ENCODE measurements at regions of chr3 and their contacts with region 1.

Region 1: DNA sequence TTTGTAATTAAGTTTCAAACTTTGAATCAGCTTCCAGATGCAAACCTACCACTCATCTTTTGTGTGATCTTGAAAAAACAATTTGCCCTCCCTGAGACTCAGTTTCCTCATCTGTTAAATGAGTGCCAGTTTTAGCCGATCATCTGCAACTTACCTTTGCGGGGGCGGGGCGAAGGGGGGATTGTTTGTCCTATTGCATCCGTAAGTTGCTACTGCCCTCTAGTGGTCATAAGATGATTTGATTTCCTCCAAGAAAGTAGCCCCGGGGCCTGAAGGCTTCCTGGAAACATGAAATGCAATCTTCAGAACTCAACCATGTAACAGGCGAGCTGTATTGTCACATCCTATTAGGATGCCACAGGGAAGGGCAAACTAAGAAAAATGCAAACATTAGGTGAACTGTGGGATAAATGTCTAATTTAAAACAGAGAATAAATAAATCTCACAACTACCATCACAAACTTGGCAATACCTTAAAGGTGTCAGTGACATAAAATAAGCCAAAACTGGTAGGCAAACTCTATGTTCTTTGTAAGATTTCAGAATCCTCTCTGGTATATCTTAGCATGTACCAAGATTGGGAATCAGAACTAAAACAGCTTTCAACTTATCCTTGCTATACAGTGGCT is 63.5 kb upstream of the CLDN18 start:
- DNase-seq: peak; percentile 79
- H3K4me3 Mint-ChIP-seq: no peak overlapping the region
- H3K27ac Mint-ChIP-seq: no peak overlapping the region
- H3K4me1 Mint-ChIP-seq: peaks cover 4% of the 10 kb centered on the region
- H3K27me3 Mint-ChIP-seq: no peaks in the 10 kb centered on the region

Region 2: DNA sequence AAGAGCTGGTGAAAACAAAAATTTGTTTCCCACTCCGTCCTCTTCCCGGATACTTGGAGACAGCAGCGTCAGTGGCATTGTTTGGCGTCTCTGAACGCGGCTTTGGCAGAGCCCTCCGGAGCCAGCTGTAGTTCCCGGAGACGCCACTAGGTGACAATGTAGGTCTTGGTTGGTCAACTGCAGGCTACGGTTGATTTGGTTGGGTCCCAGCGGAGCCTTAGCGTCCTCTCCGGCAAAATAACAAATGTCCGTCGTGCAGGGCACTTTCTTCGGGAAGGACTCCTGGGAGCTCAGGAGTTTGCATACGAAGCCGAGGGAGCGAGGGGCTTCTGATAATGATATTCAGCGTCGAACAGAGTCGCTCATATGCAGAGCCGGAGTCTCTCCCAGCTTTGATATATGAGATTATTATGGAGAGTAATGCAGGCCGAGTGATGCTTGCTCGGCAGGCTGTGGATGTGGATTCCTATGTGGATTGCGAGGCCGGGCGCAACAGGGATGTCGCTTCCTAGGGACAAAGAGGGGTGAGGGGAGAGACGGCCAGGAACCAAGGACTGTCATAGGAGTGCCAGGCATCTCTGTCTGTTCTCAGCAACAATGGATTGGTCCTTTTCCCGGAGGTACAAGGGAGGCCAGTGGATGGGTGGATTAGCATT is 913.9 kb before region 1 on chr3:
- intact Hi-C with region 1: loop called (anchors 5 kb)
- DNase-seq: peak; percentile 93
- H3K4me3 Mint-ChIP-seq: peak overlapping the region; percentile 62
- H3K27ac Mint-ChIP-seq: no peak overlapping the region
- H3K4me1 Mint-ChIP-seq: peaks cover 6% of the 10 kb centered on the region
- H3K27me3 Mint-ChIP-seq: peaks cover 33% of the 10 kb centered on the region

Region 3: GRCh38 chr3:137105277-137105977 is 841.0 kb before region 1 on chr3:
- intact Hi-C with region 1: loop called (anchors 1 kb)
- DNase-seq: peak; percentile 71
- H3K4me3 Mint-ChIP-seq: no peak overlapping the region
- H3K27ac Mint-ChIP-seq: no peak overlapping the region
- H3K4me1 Mint-ChIP-seq: no peaks in the 10 kb centered on the region
- H3K27me3 Mint-ChIP-seq: peaks cover 10% of the 10 kb centered on the region

Region 4: DNA sequence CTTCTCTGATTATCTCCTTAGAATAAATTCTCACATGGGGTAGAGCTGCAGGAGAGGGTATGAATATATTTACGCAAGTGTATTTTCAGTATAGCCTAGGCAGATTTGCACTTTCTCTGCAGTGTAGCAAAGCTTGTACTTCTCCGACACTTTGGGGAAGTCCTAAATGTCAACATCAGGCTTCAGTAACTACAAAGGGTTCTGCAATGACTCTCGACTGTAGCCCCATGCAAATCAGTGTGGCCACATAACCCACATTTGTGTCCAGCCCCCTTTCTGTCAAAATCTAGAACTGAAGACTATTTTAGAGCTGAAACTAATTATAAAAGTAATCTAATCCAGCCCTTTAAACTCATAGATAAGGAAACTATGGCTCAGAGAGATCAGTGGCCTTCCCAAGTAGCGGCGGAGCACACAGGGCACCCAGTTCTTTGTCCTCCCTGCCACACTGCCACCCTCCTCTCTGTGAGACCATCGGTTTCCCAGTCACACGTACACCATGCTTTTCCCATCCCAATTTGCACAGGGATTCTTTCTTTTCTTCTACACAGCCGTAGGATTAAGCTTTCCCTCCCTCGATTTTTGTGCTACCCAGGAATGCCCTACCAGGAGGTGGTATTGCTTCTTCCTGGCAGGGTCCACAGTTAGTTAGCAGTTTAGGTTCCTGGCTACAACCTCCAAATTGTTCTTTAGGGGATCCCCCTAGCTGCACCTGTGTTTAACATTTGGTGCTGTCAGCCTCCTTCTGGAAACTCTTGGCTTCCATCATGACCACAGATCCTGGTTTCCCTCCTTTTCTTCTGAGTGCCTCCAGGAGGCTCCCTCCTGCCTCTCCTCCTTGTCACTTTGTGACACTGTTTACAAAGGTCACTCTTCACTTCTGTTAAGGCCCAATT is 424.9 kb after region 1 on chr3:
- intact Hi-C with region 1: no loop called
- DNase-seq: no peak
- H3K4me3 Mint-ChIP-seq: no peak overlapping the region
- H3K27ac Mint-ChIP-seq: peak overlapping the region; percentile 22
- H3K4me1 Mint-ChIP-seq: peaks cover 9% of the 10 kb centered on the region
- H3K27me3 Mint-ChIP-seq: peaks cover 10% of the 10 kb centered on the region